Adrenal gland (tissue), 19 donors: ENCODE measurements at regions of chr20 and their contacts with region 1.

Region 1: GRCh38 chr20:43537921-43538877 is 20.6 kb upstream of the SGK2 start:
- DNase-seq: peak; percentile 47 to 89 (median 72)
- H3K4me3 ChIP-seq: no peak overlapping the region
- H3K27ac ChIP-seq: no peak overlapping the region
- H3K4me1 ChIP-seq: no peaks in the 10 kb centered on the region
- H3K27me3 ChIP-seq: no peaks in the 10 kb centered on the region
- CTCF ChIP-seq: peak; percentile 74 to 90 (median 82)
- POLR2A ChIP-seq: no peak

Region 2: DNA sequence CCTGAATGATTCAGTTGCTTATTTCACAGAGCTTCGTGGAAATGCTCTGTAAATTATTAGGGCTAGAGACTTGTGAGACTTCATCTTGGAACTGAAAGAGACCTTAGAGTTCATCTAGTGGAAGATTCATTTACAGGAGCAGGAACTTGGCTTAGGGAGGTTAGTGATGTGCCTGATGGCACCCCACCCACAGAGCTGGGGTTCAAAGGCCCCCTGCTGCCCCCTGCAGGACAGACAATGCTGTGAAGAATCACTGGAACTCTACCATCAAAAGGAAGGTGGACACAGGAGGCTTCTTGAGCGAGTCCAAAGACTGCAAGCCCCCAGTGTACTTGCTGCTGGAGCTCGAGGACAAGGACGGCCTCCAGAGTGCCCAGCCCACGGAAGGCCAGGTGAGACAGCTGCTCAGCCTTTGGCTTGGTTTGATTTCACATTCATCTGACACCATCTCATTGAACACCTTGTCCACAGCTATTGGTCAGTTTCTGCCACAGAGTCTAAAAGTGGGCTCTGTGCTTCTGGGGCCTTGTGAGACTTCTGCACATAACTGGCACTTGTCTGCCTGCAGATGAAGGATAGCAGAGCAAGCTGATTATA is 153.8 kb after region 1 on chr20:
- intact Hi-C with region 1: loop called (anchors 5 to 10 kb)
- DNase-seq: peak; percentile 35 to 70 (median 54)
- H3K4me3 ChIP-seq: no peak overlapping the region
- H3K27ac ChIP-seq: no peak overlapping the region
- H3K4me1 ChIP-seq: no peaks in the 10 kb centered on the region
- H3K27me3 ChIP-seq: no peaks in the 10 kb centered on the region
- CTCF ChIP-seq: peak; percentile 30 to 52 (median 42)
- POLR2A ChIP-seq: no peak

Region 3: GRCh38 chr20:44089987-44090674 is 551.9 kb after region 1 on chr20:
- intact Hi-C with region 1: loop called in 1 of 2 experiments (anchors 5 kb)
- DNase-seq: peak in 5 of 7 donors; percentile 25 to 73 (median 47)
- H3K4me3 ChIP-seq: no peak overlapping the region
- H3K27ac ChIP-seq: no peak overlapping the region
- H3K4me1 ChIP-seq: no peaks in the 10 kb centered on the region
- H3K27me3 ChIP-seq: peaks cover 3% of the 10 kb centered on the region
- CTCF ChIP-seq: no peak
- POLR2A ChIP-seq: no peak